SK-N-SH (cell line): ENCODE measurements at regions of chr2 and their contacts with region 1.

Region 1: DNA sequence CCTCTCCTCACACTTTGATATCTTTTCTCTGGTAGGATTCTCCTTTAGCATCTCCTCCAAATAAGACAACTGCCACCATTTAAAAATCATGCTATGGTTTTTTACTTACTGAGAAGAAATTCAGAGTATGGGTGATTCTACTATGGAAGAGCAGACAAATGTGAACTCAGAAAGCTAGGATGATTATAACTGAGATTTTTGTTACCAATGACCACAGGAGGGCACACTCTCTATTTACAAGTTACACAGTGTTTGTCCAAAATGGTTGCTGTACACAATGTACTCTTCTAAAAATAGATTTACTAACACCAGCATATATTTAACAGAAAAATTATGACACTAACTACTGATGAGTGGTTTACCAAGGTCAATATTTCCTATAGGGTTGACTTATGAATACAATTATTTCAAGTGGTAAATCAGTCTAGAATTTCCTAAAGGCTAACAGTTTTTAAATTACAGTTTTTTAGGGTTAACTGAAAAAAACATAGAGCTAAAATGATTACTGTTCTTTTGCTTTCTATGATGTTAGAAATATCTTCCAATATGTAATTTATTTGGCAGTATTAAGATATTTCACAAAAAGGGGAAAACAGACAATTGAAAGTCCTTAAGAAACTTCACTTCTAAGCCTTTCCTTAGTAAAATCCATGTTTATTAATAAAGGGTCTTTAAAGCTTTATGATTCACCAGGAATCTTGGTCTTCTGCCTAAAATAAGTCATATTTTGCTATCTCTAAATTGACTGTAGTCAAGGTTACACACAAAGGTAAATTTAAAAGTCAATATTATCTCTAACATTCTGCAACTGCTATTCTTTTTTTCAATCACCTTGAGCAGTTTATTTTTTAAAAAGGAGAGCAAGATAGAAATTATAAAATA is 57.2 kb downstream of the MAP4K3 start:
- DNase-seq: peak; percentile 60
- H3K4me3 ChIP-seq: no peak overlapping the region
- H3K27ac ChIP-seq: peak overlapping the region; percentile 43 to 49; a peak in 3 of 4 replicates
- H3K4me1 ChIP-seq: peaks cover 3 to 28% of the 10 kb centered on the region in 2 experiments
- H3K27me3 ChIP-seq: no peaks in the 10 kb centered on the region
- CTCF ChIP-seq: peak; percentile 84
- EP300 ChIP-seq: no peak
- RAD21 ChIP-seq: peak; percentile 91

Region 2: DNA sequence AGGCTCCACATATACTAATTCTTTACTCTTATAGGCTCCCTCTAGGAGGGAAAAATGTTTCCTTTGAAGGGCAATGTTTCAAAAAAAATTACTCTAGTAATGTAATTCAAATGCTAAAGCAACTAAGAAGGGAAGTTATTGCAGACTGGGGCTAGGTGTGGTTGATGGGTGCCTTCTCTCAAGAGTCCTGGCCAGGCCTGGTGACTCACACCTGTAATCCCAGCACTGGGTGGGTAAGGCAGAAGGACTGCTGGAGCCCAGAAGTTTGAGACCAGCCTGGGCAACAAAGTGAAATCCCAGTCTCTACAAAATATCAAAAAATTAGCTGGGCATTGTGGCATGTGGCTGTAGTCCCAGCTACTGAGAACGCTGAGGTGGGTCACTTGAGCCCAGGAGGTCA is 104.9 kb before region 1 on chr2:
- CTCF ChIA-PET with region 1: no interaction called
- POLR2A ChIA-PET with region 1: no interaction called
- DNase-seq: no peak
- H3K4me3 ChIP-seq: no peak overlapping the region
- H3K27ac ChIP-seq: no peak overlapping the region
- H3K4me1 ChIP-seq: no peaks in the 10 kb centered on the region
- H3K27me3 ChIP-seq: no peaks in the 10 kb centered on the region
- CTCF ChIP-seq: no peak
- EP300 ChIP-seq: no peak
- RAD21 ChIP-seq: no peak

Region 3: DNA sequence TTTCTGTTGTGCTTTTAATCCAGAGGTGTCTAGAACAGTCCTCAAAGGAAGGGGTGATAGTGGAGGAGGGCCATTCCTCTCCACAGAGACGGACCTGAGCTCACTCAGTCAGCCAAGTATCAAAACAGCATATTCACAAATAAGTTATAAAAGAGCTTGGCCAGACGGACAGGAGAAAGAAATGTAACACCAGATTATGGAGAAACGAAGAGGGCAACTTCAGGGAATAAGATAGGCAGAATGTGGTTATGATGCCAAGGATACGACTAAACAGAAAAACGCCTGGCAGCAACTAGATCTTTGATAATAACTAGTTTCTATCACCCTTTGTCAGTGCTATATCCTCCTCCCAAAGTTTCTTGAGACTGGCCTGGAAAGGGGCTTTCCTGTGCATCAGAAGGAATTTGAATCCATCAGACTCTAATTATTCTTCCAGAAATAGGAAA is 14.7 kb after region 1 on chr2:
- CTCF ChIA-PET with region 1: interaction called, 23 read pairs
- POLR2A ChIA-PET with region 1: no interaction called
- DNase-seq: no peak
- H3K4me3 ChIP-seq: no peak overlapping the region
- H3K27ac ChIP-seq: peak overlapping the region; percentile 30 to 45
- H3K4me1 ChIP-seq: peaks cover 24 to 28% of the 10 kb centered on the region in 2 experiments; a peak in 3 of 4 replicates
- H3K27me3 ChIP-seq: no peaks in the 10 kb centered on the region
- CTCF ChIP-seq: no peak
- EP300 ChIP-seq: no peak
- RAD21 ChIP-seq: no peak

Region 4: DNA sequence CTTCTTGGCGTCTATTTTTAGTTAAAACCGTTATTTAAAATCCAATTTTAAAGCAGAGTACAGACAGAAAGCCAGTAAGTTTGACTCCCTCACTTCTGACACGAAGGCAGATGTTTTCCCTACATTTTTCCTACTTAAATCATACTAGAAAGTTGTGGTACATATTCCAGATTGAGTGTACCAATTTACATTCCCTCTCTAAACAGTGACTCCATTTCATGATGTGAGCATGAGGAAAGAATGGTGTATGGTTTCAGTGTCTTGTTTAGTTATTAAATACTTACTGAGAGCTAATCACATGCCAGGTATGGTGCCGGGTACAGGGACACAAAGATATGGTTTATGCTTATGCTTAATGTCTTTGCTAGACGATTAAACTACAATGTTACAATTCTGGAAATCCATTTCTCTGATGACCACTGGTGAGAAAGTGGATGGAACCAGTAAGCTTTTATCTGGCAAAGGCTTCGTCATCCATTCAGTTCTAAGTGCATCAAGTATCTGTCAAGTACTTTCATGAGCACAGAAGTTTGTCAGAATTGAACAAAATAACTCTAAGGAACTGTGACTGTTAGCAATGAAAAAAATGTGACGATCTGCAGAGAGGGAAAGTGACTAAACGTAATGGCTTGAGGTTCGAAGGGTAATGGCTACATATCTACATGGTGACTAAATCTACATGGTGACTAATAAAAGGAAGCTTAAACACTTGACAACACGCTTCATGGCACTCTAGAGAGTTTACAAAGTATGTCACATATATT is 31.5 kb after region 1 on chr2:
- CTCF ChIA-PET with region 1: interaction called, 13 read pairs
- POLR2A ChIA-PET with region 1: no interaction called
- DNase-seq: no peak
- H3K4me3 ChIP-seq: peak overlapping the region; percentile 14 to 28; a peak in 3 of 4 replicates
- H3K27ac ChIP-seq: peak overlapping the region; percentile 60 to 88
- H3K4me1 ChIP-seq: peaks cover 13 to 52% of the 10 kb centered on the region in 2 experiments; a peak in 3 of 4 replicates
- H3K27me3 ChIP-seq: no peaks in the 10 kb centered on the region
- CTCF ChIP-seq: no peak
- EP300 ChIP-seq: peak in 1 of 2 experiments; percentile 69; a peak in 1 of 4 replicates
- RAD21 ChIP-seq: no peak

Region 5: DNA sequence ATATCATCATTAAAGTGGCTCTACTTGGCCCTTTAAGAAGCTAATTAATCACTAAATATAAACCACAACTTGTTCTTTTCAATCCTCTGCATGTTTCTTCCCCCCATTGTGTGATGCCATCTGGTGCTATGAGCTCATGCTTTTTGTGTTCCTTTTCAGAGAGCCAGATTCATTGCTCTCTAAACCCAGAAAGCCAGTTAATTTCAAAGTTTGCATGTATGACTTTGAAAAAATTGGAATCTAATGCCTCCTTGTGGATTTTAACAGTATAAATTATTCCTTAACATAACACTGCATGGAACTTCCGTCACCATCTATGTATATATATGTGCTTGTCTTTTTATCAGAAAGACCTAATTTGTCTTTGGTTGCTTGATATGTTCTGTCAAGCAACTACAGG is 317.0 kb after region 1 on chr2:
- CTCF ChIA-PET with region 1: interaction called, 53 read pairs
- POLR2A ChIA-PET with region 1: no interaction called
- DNase-seq: peak; percentile 28
- H3K4me3 ChIP-seq: no peak overlapping the region
- H3K27ac ChIP-seq: no peak overlapping the region
- H3K4me1 ChIP-seq: peaks cover 0 to 6% of the 10 kb centered on the region in 2 experiments; a peak in 1 of 4 replicates
- H3K27me3 ChIP-seq: no peaks in the 10 kb centered on the region
- CTCF ChIP-seq: peak; percentile 68
- EP300 ChIP-seq: no peak
- RAD21 ChIP-seq: peak; percentile 79

Region 6: GRCh38 chr2:39728941-39729351 is 349.1 kb after region 1 on chr2:
- CTCF ChIA-PET with region 1: interaction called, 53 read pairs
- POLR2A ChIA-PET with region 1: no interaction called
- DNase-seq: peak; percentile 46
- H3K4me3 ChIP-seq: no peak overlapping the region; a peak in 1 of 4 replicates
- H3K27ac ChIP-seq: peak overlapping the region in 1 of 2 experiments; percentile 36; a peak in 1 of 4 replicates
- H3K4me1 ChIP-seq: peaks cover 0 to 10% of the 10 kb centered on the region in 2 experiments; a peak in 1 of 4 replicates
- H3K27me3 ChIP-seq: no peaks in the 10 kb centered on the region
- CTCF ChIP-seq: peak; percentile 88
- EP300 ChIP-seq: no peak
- RAD21 ChIP-seq: peak; percentile 62